Activated CD4-positive, alpha-beta memory T cell treated with anti-CD3 and anti-CD28 coated beads, Interleukin-2, amount 10 ng/mL, durations not matched to agents 7 days and 5 days (primary cell): ENCODE measurements at regions of chr15 and their contacts with region 1.

Region 1: GRCh38 chr15:33700695-33701304 is 267.5 kb upstream of the CHRM5 start:
- DNase-seq: peak; percentile 57
- H3K4me3 Mint-ChIP-seq: no peak overlapping the region
- H3K27ac Mint-ChIP-seq: no peak overlapping the region
- H3K4me1 Mint-ChIP-seq: no peaks in the 10 kb centered on the region
- H3K27me3 Mint-ChIP-seq: no peaks in the 10 kb centered on the region

Region 2: DNA sequence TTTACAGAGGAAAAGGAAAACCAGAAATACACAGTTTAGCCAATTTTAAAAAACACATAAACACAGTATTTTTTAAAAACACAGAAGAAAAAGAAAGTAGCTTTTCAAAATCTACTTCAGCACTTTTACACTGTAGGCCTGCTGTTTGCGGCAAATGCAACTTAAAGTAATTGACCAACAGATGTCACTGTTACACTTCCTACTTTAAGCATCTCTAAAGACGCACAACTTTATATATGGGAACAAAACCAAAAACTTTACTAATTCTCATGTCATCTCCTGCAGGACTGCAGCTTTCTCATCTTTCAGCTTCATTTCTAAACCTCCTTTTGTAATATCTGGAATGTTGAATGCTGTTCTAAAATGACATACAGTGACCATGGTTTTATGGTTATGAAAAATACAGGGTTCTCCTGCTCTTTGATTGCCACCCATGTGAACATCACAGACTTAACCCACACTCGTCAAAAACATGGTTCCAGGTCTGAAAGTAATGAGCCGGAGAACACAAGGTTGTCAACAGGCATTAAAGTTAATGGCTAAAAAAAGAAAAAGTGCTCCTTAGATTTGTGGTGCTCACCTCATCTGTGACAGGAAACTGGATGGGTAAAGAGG is 614.2 kb before region 1 on chr15:
- CTCF ChIA-PET with region 1: interaction called, 13 read pairs
- POLR2A ChIA-PET with region 1: no interaction called
- DNase-seq: no peak
- H3K4me3 Mint-ChIP-seq: no peak overlapping the region
- H3K27ac Mint-ChIP-seq: no peak overlapping the region
- H3K4me1 Mint-ChIP-seq: no peaks in the 10 kb centered on the region
- H3K27me3 Mint-ChIP-seq: peaks cover 3% of the 10 kb centered on the region

Region 3: DNA sequence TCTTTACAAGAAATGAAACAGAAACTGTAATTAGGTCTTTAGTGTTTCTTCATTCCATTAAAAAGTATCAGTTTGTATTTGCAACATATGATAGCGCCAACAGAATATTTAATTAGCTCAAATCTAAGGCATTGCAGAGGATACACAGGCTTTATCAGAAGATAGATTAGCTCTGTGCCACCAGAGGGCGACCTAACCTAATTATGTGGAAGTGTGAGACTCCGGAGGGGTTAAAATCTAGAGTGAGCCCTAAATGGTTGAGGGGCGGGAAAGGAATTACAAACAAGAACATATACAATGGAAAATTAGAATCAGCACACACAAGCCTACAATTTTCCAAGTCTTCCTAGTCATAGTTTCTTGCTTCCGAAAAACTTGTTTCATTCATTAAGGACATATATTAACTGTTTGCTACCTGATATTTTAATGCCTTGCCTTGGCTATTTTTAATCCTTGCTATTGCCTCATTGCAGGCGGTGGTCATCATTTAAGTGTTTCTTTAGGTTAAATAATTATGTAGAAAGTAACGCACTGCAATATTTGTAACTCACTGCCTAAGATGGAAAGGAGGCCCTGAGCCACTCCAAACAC is 408.0 kb before region 1 on chr15:
- CTCF ChIA-PET with region 1: interaction called, 23 read pairs
- POLR2A ChIA-PET with region 1: no interaction called
- DNase-seq: peak; percentile 38
- H3K4me3 Mint-ChIP-seq: no peak overlapping the region
- H3K27ac Mint-ChIP-seq: no peak overlapping the region
- H3K4me1 Mint-ChIP-seq: no peaks in the 10 kb centered on the region
- H3K27me3 Mint-ChIP-seq: peaks cover 2% of the 10 kb centered on the region

Region 4: GRCh38 chr15:33440900-33441299 is 259.9 kb before region 1 on chr15:
- CTCF ChIA-PET with region 1: no interaction called
- POLR2A ChIA-PET with region 1: no interaction called
- DNase-seq: no peak
- H3K4me3 Mint-ChIP-seq: no peak overlapping the region
- H3K27ac Mint-ChIP-seq: no peak overlapping the region
- H3K4me1 Mint-ChIP-seq: no peaks in the 10 kb centered on the region
- H3K27me3 Mint-ChIP-seq: peaks cover 7% of the 10 kb centered on the region

Region 5: GRCh38 chr15:33629647-33630046 is 71.2 kb before region 1 on chr15:
- CTCF ChIA-PET with region 1: no interaction called
- POLR2A ChIA-PET with region 1: no interaction called
- DNase-seq: no peak
- H3K4me3 Mint-ChIP-seq: no peak overlapping the region
- H3K27ac Mint-ChIP-seq: no peak overlapping the region
- H3K4me1 Mint-ChIP-seq: no peaks in the 10 kb centered on the region
- H3K27me3 Mint-ChIP-seq: peaks cover 2% of the 10 kb centered on the region

Region 6: DNA sequence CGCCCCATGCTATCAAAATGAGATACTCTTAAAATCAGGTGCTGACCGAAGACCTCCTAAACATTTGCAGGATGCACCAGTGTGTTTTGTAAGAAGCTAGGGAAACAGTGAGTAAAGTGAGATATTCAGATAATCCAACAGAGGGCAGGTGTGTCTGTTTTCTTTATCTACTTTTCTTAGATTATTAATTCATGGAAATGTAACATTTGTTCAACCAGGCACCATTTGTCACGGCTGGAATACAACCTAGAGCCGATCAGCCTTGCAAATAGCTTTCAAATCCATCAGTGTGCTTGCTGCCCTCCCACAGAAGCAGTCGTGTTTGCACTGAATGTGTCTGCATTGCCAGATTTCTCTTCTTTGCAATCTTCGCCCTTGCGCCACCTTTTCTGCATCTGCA is 65.6 kb after region 1 on chr15:
- CTCF ChIA-PET with region 1: no interaction called
- POLR2A ChIA-PET with region 1: no interaction called
- DNase-seq: no peak
- H3K4me3 Mint-ChIP-seq: no peak overlapping the region
- H3K27ac Mint-ChIP-seq: no peak overlapping the region
- H3K4me1 Mint-ChIP-seq: no peaks in the 10 kb centered on the region
- H3K27me3 Mint-ChIP-seq: peaks cover 5% of the 10 kb centered on the region